Adrenal gland (tissue), 19 donors: ENCODE measurements at regions of chr11 and their contacts with region 1.

Region 1: DNA sequence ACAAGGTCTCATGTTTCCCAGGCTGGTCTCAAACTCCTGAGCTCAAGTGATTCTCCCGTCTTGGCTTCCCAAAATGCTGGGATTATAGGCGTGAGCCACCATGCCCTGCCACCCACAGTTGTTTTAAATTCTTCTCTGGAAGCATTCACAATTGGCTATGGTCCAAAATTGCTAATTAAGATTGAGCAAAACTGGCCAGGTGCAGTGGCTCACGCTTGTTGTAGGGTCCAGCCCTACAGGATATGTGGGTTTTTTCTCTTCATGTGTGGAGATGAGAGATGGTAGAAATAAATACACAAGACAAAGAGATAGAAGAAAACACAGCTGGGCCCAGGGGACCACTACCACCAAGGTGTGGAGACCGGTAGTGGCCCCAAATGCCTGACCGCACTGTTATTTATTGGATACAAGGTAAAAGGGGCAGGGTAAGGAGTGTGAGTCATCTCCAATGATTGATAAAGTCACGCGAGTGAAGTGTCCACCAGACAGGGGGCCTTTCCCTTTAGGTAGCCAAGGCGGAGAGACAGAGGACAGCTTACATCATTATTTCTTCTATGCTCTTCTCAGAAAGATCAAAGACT is 8.3 kb upstream of the ACY3 start:
- DNase-seq: no peak
- H3K4me3 ChIP-seq: no peak overlapping the region
- H3K27ac ChIP-seq: no peak overlapping the region
- H3K4me1 ChIP-seq: no peaks in the 10 kb centered on the region
- H3K27me3 ChIP-seq: no peaks in the 10 kb centered on the region
- CTCF ChIP-seq: no peak
- POLR2A ChIP-seq: no peak

Region 2: GRCh38 chr11:67401495-67402191 is 257.1 kb before region 1 on chr11 and contains the start of gene PPP1CA:
- intact Hi-C with region 1: no loop called
- DNase-seq: peak; percentile 90 to 94 (median 91)
- H3K4me3 ChIP-seq: peak within 1 kb of the TSS; percentile 66 to 99 (median 78)
- H3K27ac ChIP-seq: peak within 1 kb of the TSS; percentile 60 to 99 (median 88)
- H3K4me1 ChIP-seq: peaks cover 20 to 47% of the 10 kb centered on the region in 2 donors
- H3K27me3 ChIP-seq: no peaks in the 10 kb centered on the region
- CTCF ChIP-seq: peak in 3 of 6 experiments; percentile 15 to 65 (median 34)
- POLR2A ChIP-seq: peak; percentile 57 to 76
- total RNA-seq, gene PPP1CA: 126 to 289 (median 168) TPM

Region 3: DNA sequence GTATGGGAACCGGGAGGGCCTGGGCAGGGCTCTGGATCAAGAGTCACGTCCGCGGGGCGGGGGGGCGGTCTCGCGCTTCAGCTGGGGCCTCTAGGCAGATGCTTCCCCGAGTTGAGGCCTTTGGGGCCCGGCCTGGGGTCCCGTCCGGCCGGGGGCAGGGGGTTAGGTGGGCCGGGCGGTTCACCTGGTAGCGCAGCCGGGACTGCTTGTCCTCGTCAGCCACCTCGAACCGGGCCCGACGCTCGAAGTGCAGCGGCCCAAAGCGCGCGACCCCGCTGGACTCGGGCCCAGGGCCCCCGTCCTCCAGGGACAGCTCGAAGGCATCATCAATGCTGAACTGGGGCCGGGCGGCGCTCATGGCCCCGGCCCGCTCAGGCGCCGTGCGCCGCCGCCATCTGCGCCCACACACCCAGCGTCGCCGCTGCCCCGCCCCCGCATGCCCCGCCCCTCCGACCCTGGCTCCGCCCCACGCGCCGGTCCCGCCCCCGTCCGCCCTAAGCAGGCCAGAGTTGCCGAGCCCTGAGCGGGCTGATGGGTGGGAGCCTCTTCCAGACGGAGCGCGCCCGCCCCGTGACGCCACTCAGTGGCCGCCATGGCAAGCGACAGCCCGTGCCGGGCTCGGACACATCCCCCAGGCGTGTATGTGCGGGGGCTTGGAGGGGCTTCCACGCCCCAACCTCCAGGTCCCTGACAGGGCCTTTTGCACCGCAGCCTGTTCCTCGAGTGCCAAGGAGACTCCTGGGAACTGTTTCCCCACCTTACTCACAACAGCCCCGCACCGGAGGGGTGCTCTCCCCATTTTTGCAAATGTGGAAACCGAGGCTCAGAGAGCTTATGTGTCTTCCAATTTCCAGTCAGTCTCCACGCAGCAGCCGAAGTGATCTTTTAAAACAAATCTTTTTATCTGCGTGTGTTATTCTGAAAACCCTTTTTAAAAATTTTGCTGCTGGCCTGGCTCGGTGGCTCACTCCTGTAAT is 189.7 kb before region 1 on chr11 and contains the start of gene TMEM134:
- intact Hi-C with region 1: no loop called
- DNase-seq: peak; percentile 92 to 96 (median 94)
- H3K4me3 ChIP-seq: peak within 1 kb of the TSS; percentile 16 to 84 (median 61)
- H3K27ac ChIP-seq: peak within 1 kb of the TSS; percentile 52 to 92 (median 84)
- H3K4me1 ChIP-seq: peaks cover 15 to 36% of the 10 kb centered on the region in 2 donors
- H3K27me3 ChIP-seq: no peaks in the 10 kb centered on the region
- CTCF ChIP-seq: peak in 5 of 6 experiments; percentile 37 to 59 (median 41)
- POLR2A ChIP-seq: peak; percentile 77 to 88
- total RNA-seq, gene TMEM134: 32.3 to 257 (median 96.8) TPM

Region 4: GRCh38 chr11:67572747-67573419 is 85.9 kb before region 1 on chr11:
- intact Hi-C with region 1: loop called in 1 of 2 experiments (anchors 2 kb)
- DNase-seq: peak; percentile 54 to 83 (median 69)
- H3K4me3 ChIP-seq: no peak overlapping the region
- H3K27ac ChIP-seq: no peak overlapping the region
- H3K4me1 ChIP-seq: no peaks in the 10 kb centered on the region
- H3K27me3 ChIP-seq: peaks cover 6% of the 10 kb centered on the region
- CTCF ChIP-seq: peak; percentile 64 to 81 (median 71)
- POLR2A ChIP-seq: no peak

Region 5: GRCh38 chr11:67705264-67705663 is 46.5 kb after region 1 on chr11:
- intact Hi-C with region 1: no loop called
- DNase-seq: no peak
- H3K4me3 ChIP-seq: no peak overlapping the region
- H3K27ac ChIP-seq: no peak overlapping the region
- H3K4me1 ChIP-seq: no peaks in the 10 kb centered on the region
- H3K27me3 ChIP-seq: peaks cover 2% of the 10 kb centered on the region
- CTCF ChIP-seq: no peak
- POLR2A ChIP-seq: no peak